ENCODE measurements at regions of chr19 and their contacts with region 1.

Region 1: DNA sequence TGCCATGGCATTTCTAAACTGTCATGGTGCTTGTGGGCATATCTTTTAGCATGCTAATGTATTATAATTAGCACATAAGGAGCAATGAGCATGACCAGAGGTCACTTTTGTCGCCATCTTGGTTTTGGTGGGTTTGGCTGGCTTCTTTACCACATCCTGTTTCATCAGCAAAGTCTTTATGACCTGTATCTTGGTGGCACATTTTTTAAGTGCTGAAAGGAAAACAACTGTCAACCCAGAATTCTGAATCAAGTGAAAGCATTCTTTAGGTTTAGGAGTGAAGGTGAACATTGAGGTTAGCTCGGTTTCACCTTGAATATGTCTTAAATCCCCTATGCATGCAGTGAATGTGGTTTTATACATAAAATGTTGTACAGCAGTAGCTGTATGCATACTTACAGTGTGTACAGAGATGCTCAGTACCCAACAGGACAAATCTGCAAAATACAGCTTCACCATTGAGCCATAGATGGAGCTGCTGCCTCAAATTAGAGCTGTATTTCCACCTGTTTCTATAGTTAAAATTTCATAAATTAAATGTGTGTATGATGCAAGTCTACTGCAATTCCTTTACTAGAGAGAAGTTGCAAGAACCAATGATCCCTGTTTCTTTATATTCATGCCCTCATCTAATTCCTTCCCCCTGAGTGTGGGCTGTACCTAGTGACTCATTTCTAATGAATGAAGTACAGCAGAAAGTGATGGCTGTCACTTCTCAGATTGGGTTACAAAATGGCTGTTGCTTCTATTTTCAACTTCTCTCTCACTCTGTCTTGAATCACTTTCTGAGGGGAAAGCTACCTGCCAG is 25.2 kb upstream of the IGSF23 start:
- DNase-seq: peak; percentile 71
- ATAC-seq: peak; percentile 87
- H3K4me3 Mint-ChIP-seq: no peak overlapping the region
- H3K27ac Mint-ChIP-seq: peak overlapping the region; percentile 84
- H3K4me1 Mint-ChIP-seq: peaks cover 20% of the 10 kb centered on the region
- H3K27me3 Mint-ChIP-seq: peaks cover 6% of the 10 kb centered on the region

Region 2: GRCh38 chr19:44512326-44513298 is 75.6 kb before region 1 on chr19:
- CTCF ChIA-PET with region 1: no interaction called
- POLR2A ChIA-PET with region 1: no interaction called
- intact Hi-C with region 1: no loop called
- DNase-seq: peak; percentile 71
- ATAC-seq: no peak
- H3K4me3 Mint-ChIP-seq: no peak overlapping the region
- H3K27ac Mint-ChIP-seq: no peak overlapping the region
- H3K4me1 Mint-ChIP-seq: no peaks in the 10 kb centered on the region
- H3K27me3 Mint-ChIP-seq: peaks cover 18% of the 10 kb centered on the region

Region 3: GRCh38 chr19:44643605-44644401 is 55.6 kb after region 1 on chr19 and contains the start of gene PVR:
- CTCF ChIA-PET with region 1: interaction called, 4 read pairs
- POLR2A ChIA-PET with region 1: no interaction called
- intact Hi-C with region 1: loop called in 1 of 2 experiments (anchors 5 kb)
- DNase-seq: peak; percentile 68
- ATAC-seq: peak; percentile 83
- H3K4me3 Mint-ChIP-seq: peak within 1 kb of the TSS; percentile 81
- H3K27ac Mint-ChIP-seq: no peak within 1 kb of the TSS
- H3K4me1 Mint-ChIP-seq: peaks cover 4% of the 10 kb centered on the region
- H3K27me3 Mint-ChIP-seq: peaks cover 14% of the 10 kb centered on the region
- total RNA-seq, gene PVR: 10.9 to 11.3 TPM

Region 4: DNA sequence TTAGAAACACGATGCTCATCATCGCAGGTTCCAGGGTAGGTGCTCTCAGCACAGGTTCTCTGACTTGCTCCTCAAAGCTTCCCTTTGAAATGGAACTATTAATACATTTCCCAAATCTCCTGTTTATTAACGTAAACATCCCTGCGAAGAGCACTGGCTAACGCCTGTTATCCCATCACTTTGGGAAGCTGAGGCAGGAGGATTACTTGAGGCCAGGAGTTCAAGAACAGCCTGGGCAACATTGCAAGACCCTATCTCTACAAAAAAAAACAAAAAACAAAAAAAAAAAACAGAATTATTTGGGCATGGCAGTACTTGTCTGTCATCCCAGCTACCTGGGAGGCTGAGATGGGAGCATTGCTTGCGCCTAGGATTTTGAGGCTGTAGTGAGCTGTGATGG is 129.4 kb after region 1 on chr19:
- CTCF ChIA-PET with region 1: no interaction called
- POLR2A ChIA-PET with region 1: no interaction called
- intact Hi-C with region 1: no loop called
- DNase-seq: no peak
- ATAC-seq: no peak
- H3K4me3 Mint-ChIP-seq: no peak overlapping the region
- H3K27ac Mint-ChIP-seq: no peak overlapping the region
- H3K4me1 Mint-ChIP-seq: peaks cover 11% of the 10 kb centered on the region
- H3K27me3 Mint-ChIP-seq: peaks cover 2% of the 10 kb centered on the region

Region 5: GRCh38 chr19:44752816-44753618 is 164.8 kb after region 1 on chr19:
- CTCF ChIA-PET with region 1: no interaction called
- POLR2A ChIA-PET with region 1: no interaction called
- intact Hi-C with region 1: loop called in 1 of 2 experiments (anchors 5 kb)
- DNase-seq: peak; percentile 98
- ATAC-seq: peak; percentile 79
- H3K4me3 Mint-ChIP-seq: peak overlapping the region; percentile 94
- H3K27ac Mint-ChIP-seq: peak overlapping the region; percentile 97
- H3K4me1 Mint-ChIP-seq: peaks cover 54% of the 10 kb centered on the region
- H3K27me3 Mint-ChIP-seq: no peaks in the 10 kb centered on the region

Measured in activated CD4-positive, alpha-beta T cell treated with anti-CD3 and anti-CD28 coated beads for 36 hours (primary cell).